ENCODE measurements at regions of chr18 and their contacts with region 1.

Region 1: GRCh38 chr18:63930773-63931354 is 18.2 kb upstream of the HMSD start:
- DNase-seq: no peak
- ATAC-seq: no peak
- H3K4me3 ChIP-seq: no peak overlapping the region
- H3K27ac ChIP-seq: no peak overlapping the region
- H3K4me1 ChIP-seq: no peaks in the 10 kb centered on the region
- H3K27me3 ChIP-seq: peaks cover 2% of the 10 kb centered on the region

Region 2: GRCh38 chr18:63829886-63830285 is 101.0 kb before region 1 on chr18:
- intact Hi-C with region 1: loop called in 2 of 4 experiments (anchors 5 to 10 kb)
- DNase-seq: no peak
- ATAC-seq: no peak
- H3K4me3 ChIP-seq: no peak overlapping the region
- H3K27ac ChIP-seq: no peak overlapping the region
- H3K4me1 ChIP-seq: no peaks in the 10 kb centered on the region
- H3K27me3 ChIP-seq: no peaks in the 10 kb centered on the region

Region 3: DNA sequence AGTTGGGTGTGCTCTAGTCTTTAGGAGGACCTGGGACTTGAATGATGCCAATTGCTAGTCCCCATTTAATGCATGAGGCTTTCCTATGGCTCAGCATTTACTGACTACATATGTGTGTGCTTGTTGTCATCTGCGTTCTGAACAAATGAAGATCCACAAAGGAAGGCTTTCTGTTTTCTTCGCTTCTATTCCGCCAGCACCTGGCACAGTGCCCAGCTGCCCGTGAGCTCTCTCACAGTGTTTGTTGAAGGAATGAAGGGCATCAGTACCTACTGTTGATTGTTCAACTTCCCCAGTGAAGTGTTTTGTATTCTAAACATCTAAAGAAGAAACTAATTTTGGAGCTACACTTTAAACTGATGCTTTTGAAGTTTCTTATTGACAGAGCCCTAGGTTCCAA is 340.4 kb after region 1 on chr18:
- intact Hi-C with region 1: no loop called
- DNase-seq: no peak
- ATAC-seq: no peak
- H3K4me3 ChIP-seq: no peak overlapping the region
- H3K27ac ChIP-seq: no peak overlapping the region
- H3K4me1 ChIP-seq: no peaks in the 10 kb centered on the region
- H3K27me3 ChIP-seq: no peaks in the 10 kb centered on the region

Measured in right cardiac atrium (tissue), 5 donors.